ENCODE measurements at regions of chr17 and their contacts with region 1.

Region 1: DNA sequence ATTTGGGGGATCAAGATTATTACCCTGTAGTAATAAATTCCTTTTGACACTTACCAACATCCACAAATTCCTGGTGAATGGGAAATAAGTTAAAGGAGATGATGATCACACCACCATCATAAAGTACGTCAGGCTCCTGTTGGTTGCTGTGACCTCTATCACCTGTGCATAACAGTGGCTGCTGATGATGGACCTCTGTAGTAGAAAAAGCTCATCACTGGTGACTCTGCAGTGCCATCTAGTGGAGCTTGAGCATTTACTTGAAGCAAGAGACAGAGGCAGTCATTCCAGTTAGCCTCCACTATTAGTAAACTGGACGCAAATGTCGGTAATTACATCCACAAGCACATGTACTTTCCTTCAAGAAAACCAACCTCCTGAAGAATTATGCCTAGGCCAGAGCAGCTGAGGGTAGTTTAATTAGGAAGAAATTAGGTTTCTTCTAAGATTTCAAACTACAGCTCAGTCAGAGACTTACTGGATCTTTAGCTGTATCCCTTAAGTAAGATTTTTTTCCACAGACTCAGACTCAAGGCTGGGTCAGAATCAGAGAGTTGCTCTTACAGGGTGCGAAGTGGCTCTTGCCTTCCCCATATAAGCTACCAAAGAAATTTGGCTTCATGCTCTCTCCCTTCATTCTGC is 39.3 kb downstream of the CYB561 start:
- DNase-seq: peak; percentile 34 to 89
- ATAC-seq: peak; percentile 84 to 91 (median 88)
- H3K4me3 ChIP-seq: no peak overlapping the region
- H3K4me3 Mint-ChIP-seq: no peak overlapping the region
- H3K27ac ChIP-seq: no peak overlapping the region
- H3K27ac Mint-ChIP-seq: no peak overlapping the region
- H3K4me1 ChIP-seq: no peaks in the 10 kb centered on the region
- H3K4me1 Mint-ChIP-seq: peaks cover 0 to 5% of the 10 kb centered on the region in 2 donors
- H3K27me3 ChIP-seq: no peaks in the 10 kb centered on the region
- H3K27me3 Mint-ChIP-seq: no peaks in the 10 kb centered on the region
- CTCF ChIP-seq: peak; percentile 93

Region 2: DNA sequence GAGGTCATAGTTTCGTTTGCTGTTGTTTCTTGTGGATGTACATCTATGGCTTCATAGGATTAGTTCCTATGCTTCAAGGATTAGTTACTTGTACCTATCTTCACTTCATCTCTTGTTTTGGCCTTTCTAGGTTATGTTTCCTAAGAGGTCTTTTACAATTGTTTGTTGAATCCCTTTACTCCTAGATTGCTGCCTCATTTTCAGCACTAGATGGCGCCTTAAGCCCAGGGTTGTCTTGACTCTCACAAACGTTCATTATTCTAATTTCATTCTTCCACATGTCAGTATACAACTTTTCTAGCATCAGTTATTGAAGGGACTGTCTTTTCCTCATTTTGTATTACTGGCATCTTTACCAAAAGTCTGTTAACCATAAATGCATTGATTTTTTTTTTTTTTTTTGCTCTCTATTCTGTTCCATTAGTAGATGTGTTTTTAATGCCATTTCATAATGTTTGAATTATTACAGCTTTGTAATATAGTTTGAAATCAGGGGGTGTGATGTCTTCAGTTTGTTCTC is 1770.8 kb before region 1 on chr17:
- intact Hi-C with region 1: loop called (anchors 10 kb)
- DNase-seq: peak; percentile 28 to 75
- ATAC-seq: peak in 2 of 3 donors; percentile 50 to 68
- H3K4me3 ChIP-seq: no peak overlapping the region
- H3K4me3 Mint-ChIP-seq: no peak overlapping the region
- H3K27ac ChIP-seq: no peak overlapping the region
- H3K27ac Mint-ChIP-seq: no peak overlapping the region
- H3K4me1 ChIP-seq: no peaks in the 10 kb centered on the region
- H3K4me1 Mint-ChIP-seq: no peaks in the 10 kb centered on the region
- H3K27me3 ChIP-seq: no peaks in the 10 kb centered on the region
- H3K27me3 Mint-ChIP-seq: peaks cover 41 to 88% of the 10 kb centered on the region in 2 donors
- CTCF ChIP-seq: peak; percentile 80

Region 3: DNA sequence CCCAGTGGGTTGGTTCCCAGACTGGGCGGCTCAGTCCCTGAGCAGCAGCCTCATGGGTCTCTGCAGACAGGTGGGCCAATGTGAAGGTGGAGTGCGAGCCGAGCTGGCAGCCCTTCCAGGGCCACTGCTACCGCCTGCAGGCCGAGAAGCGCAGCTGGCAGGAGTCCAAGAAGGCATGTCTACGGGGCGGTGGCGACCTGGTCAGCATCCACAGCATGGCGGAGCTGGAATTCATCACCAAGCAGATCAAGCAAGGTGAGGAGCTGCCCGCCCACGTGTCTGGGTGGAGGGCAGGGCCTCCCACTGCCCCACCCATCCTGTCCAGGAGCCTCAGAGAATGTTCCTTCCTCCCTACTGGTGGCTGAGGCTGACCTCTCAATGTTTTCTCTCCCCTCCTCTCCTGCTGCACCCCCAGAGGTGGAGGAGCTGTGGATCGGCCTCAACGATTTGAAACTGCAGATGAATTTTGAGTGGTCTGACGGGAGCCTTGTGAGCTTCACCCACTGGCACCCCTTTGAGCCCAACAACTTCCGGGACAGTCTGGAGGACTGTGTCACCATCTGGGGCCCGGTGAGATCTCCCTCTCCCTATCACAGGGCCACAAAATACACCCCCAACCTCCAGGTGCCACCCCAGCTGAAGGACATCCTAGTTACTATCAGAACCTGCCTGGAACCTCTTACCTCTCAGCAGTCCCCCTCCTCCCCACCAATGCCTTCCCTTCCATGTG is 735.1 kb before region 1 on chr17:
- intact Hi-C with region 1: loop called (anchors 1 kb)
- DNase-seq: no peak
- ATAC-seq: no peak
- H3K4me3 ChIP-seq: no peak overlapping the region
- H3K4me3 Mint-ChIP-seq: no peak overlapping the region
- H3K27ac ChIP-seq: no peak overlapping the region
- H3K27ac Mint-ChIP-seq: no peak overlapping the region
- H3K4me1 ChIP-seq: no peaks in the 10 kb centered on the region
- H3K4me1 Mint-ChIP-seq: peaks cover 0 to 5% of the 10 kb centered on the region in 2 donors
- H3K27me3 ChIP-seq: no peaks in the 10 kb centered on the region
- H3K27me3 Mint-ChIP-seq: no peaks in the 10 kb centered on the region
- CTCF ChIP-seq: no peak

Region 4: GRCh38 chr17:62703775-62704378 is 702.9 kb before region 1 on chr17:
- intact Hi-C with region 1: loop called (anchors 1 kb)
- DNase-seq: peak; percentile 77 to 83
- ATAC-seq: peak; percentile 89 to 97 (median 94)
- H3K4me3 ChIP-seq: peak overlapping the region; percentile 46
- H3K4me3 Mint-ChIP-seq: peak overlapping the region; percentile 50
- H3K27ac ChIP-seq: no peak overlapping the region
- H3K27ac Mint-ChIP-seq: peak overlapping the region in 1 of 2 donors; percentile 63
- H3K4me1 ChIP-seq: peaks cover 23% of the 10 kb centered on the region
- H3K4me1 Mint-ChIP-seq: peaks cover 10 to 12% of the 10 kb centered on the region in 2 donors
- H3K27me3 ChIP-seq: no peaks in the 10 kb centered on the region
- H3K27me3 Mint-ChIP-seq: peaks cover 0 to 2% of the 10 kb centered on the region in 2 donors
- CTCF ChIP-seq: peak; percentile 92

Region 5: GRCh38 chr17:62995377-62995885 is 411.4 kb before region 1 on chr17:
- intact Hi-C with region 1: loop called (anchors 1 kb)
- DNase-seq: peak in 1 of 2 donors; percentile 37
- ATAC-seq: peak; percentile 67 to 83 (median 74)
- H3K4me3 ChIP-seq: no peak overlapping the region
- H3K4me3 Mint-ChIP-seq: no peak overlapping the region
- H3K27ac ChIP-seq: no peak overlapping the region
- H3K27ac Mint-ChIP-seq: no peak overlapping the region
- H3K4me1 ChIP-seq: peaks cover 3% of the 10 kb centered on the region
- H3K4me1 Mint-ChIP-seq: peaks cover 27 to 43% of the 10 kb centered on the region in 2 donors
- H3K27me3 ChIP-seq: no peaks in the 10 kb centered on the region
- H3K27me3 Mint-ChIP-seq: no peaks in the 10 kb centered on the region
- CTCF ChIP-seq: peak; percentile 35

Region 6: GRCh38 chr17:63082273-63082993 is 324.4 kb before region 1 on chr17:
- intact Hi-C with region 1: loop called (anchors 10 kb)
- DNase-seq: no peak
- ATAC-seq: no peak
- H3K4me3 ChIP-seq: no peak overlapping the region
- H3K4me3 Mint-ChIP-seq: no peak overlapping the region
- H3K27ac ChIP-seq: no peak overlapping the region
- H3K27ac Mint-ChIP-seq: peak overlapping the region in 1 of 2 donors; percentile 25
- H3K4me1 ChIP-seq: no peaks in the 10 kb centered on the region
- H3K4me1 Mint-ChIP-seq: peaks cover 0 to 2% of the 10 kb centered on the region in 2 donors
- H3K27me3 ChIP-seq: no peaks in the 10 kb centered on the region
- H3K27me3 Mint-ChIP-seq: no peaks in the 10 kb centered on the region
- CTCF ChIP-seq: no peak

Region 7: GRCh38 chr17:63140255-63140654 is 266.6 kb before region 1 on chr17:
- intact Hi-C with region 1: no loop called
- DNase-seq: peak in 1 of 2 donors; percentile 5
- ATAC-seq: peak in 1 of 3 donors; percentile 41
- H3K4me3 ChIP-seq: no peak overlapping the region
- H3K4me3 Mint-ChIP-seq: no peak overlapping the region
- H3K27ac ChIP-seq: no peak overlapping the region
- H3K27ac Mint-ChIP-seq: no peak overlapping the region
- H3K4me1 ChIP-seq: no peaks in the 10 kb centered on the region
- H3K4me1 Mint-ChIP-seq: peaks cover 9 to 13% of the 10 kb centered on the region in 2 donors
- H3K27me3 ChIP-seq: no peaks in the 10 kb centered on the region
- H3K27me3 Mint-ChIP-seq: no peaks in the 10 kb centered on the region
- CTCF ChIP-seq: no peak